ENCODE measurements at regions of chr16 and their contacts with region 1.

Region 1: DNA sequence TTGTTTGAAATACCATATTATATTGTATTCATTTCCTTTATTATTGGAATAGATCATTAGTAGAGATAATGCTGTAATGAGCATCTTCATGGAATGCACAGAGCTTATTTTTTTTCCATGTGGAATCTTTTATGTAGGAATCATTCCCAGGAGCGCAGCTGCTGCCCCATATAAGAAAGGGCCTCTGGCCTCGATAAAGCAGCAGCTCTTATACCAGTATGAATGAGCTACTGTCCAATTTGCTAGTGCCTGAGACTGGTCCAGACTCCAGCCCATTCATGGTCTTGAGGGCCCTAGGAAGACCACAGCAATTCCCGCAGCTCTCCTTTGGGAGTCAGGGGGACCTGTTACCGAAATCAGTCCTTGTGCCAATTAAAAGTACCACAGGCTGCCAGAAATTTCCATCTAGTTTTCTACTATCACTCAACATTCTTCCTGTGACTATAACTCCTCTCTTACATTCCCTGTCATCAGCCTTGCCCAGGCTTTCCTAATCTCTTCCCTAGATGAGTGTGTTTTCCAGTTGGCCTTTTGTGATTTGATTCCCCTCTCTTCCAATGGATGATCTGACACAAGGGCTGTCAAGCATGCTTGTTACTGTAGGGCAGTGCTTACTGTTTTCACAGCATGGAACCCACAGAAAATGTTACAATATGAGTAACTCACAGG is 1.9 kb downstream of the ZNF843 start:
- DNase-seq: no peak
- ATAC-seq: no peak
- H3K4me3 ChIP-seq: no peak overlapping the region
- H3K4me3 Mint-ChIP-seq: peak overlapping the region in 1 of 10 donors; percentile 22
- H3K27ac ChIP-seq: no peak overlapping the region
- H3K27ac Mint-ChIP-seq: no peak overlapping the region
- H3K4me1 ChIP-seq: no peaks in the 10 kb centered on the region
- H3K4me1 Mint-ChIP-seq: peaks cover 0 to 23% (median 9%) of the 10 kb centered on the region in 7 donors
- H3K27me3 ChIP-seq: no peaks in the 10 kb centered on the region
- H3K27me3 Mint-ChIP-seq: peaks cover 0 to 3% (median 0%) of the 10 kb centered on the region in 5 donors

Region 2: GRCh38 chr16:30844671-30845449 is 595.8 kb before region 1 on chr16:
- CTCF ChIA-PET with region 1: interaction called, 3 read pairs
- POLR2A ChIA-PET with region 1: no interaction called
- intact Hi-C with region 1: loop called (anchors 1 to 10 kb)
- DNase-seq: peak; percentile 50 to 89 (median 83)
- ATAC-seq: peak; percentile 97
- H3K4me3 ChIP-seq: no peak overlapping the region
- H3K4me3 Mint-ChIP-seq: peak overlapping the region in 9 of 10 donors; percentile 22 to 67 (median 64)
- H3K27ac ChIP-seq: peak overlapping the region; percentile 1
- H3K27ac Mint-ChIP-seq: peak overlapping the region; percentile 2 to 82 (median 73)
- H3K4me1 ChIP-seq: peaks cover 0 to 5% of the 10 kb centered on the region in 2 donors
- H3K4me1 Mint-ChIP-seq: peaks cover 6 to 14% (median 8%) of the 10 kb centered on the region in 7 donors
- H3K27me3 ChIP-seq: no peaks in the 10 kb centered on the region
- H3K27me3 Mint-ChIP-seq: no peaks in the 10 kb centered on the region

Region 3: DNA sequence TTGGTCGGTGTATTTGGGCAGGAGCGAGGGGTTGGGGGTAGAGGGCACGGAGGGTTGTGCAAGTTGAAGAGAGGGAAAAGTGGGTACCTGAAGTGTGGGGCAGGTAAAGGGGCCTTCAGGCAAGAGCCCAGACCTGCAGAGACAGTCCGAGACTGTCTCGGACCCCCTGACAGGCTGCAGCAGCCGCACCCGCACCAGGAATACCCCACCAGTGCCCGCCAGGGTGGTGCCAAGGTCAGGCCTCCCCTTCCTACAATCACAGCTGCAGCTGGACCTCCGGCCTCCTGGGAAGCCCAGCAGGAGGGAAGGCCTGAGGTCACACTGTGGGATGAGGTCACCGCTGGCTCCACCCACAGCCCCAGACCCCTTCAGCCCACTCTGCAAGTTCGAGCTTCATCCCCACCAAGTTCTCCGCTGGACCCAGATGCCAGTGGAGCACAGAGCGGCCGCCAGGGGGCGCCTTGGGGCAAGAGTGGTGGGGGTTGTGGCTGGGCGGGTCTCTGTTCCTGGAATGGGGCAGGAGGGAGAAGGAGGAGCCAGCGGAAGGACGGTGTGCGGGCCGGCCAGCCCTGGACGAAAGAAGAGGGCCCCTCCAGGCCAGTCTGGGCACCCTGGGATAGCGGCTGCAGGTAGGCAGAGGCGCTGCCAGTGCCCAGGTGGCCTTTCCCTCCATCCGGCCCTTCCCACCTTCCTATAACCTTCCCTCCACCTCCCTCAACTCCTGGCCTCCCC is 455.8 kb before region 1 on chr16 and contains the start of gene HSD3B7:
- CTCF ChIA-PET with region 1: interaction called, 5 read pairs
- POLR2A ChIA-PET with region 1: no interaction called
- intact Hi-C with region 1: loop called in 1 of 2 experiments (anchors 1 kb)
- DNase-seq: peak; percentile 54 to 91 (median 72)
- ATAC-seq: peak; percentile 86
- H3K4me3 ChIP-seq: no peak within 1 kb of the TSS
- H3K4me3 Mint-ChIP-seq: peak within 1 kb of the TSS in 3 of 10 donors; percentile 39 to 54 (median 51)
- H3K27ac ChIP-seq: no peak within 1 kb of the TSS
- H3K27ac Mint-ChIP-seq: peak within 1 kb of the TSS in 2 of 9 donors; percentile 29 to 62
- H3K4me1 ChIP-seq: no peaks in the 10 kb centered on the region
- H3K4me1 Mint-ChIP-seq: peaks cover 0 to 17% (median 0%) of the 10 kb centered on the region in 7 donors
- H3K27me3 ChIP-seq: no peaks in the 10 kb centered on the region
- H3K27me3 Mint-ChIP-seq: no peaks in the 10 kb centered on the region
- total RNA-seq, gene HSD3B7: 0.66 to 7.0 (median 3.3) TPM

Region 4: DNA sequence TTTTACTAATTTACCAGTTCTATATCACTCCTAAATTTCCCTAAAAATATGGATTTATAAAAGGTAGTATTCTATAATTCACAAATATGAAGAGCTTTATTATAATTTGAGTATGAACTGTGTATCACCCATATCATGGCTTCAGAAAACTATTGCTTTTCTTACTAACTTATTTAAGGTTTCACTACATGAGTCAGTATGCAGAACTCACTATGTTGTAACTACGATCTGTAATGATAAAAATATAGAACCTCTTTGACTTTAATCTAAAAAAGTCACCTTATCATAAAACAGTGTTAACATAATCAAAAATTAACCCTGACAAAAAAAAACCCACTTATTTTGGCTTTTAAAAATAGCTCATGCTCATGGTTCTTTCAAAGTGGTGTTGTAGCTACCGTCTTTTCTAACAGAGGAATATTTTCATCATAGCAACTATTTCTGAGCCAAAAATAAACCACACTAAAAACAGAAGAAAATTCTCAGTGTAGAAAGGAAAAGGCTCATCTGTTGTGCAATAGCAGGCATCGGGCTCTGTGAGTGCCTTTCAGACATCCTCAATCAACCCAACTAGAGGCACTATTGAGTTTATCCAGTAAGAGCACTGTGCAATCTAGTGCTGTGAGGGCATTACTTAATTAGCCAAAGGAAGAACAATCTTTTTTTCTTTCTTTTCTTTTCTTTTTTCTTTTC is 138.8 kb before region 1 on chr16:
- CTCF ChIA-PET with region 1: no interaction called
- POLR2A ChIA-PET with region 1: no interaction called
- intact Hi-C with region 1: loop called in 1 of 2 experiments (anchors 5 kb)
- DNase-seq: no peak
- ATAC-seq: peak; percentile 78
- H3K4me3 ChIP-seq: no peak overlapping the region
- H3K4me3 Mint-ChIP-seq: peak overlapping the region in 1 of 10 donors; percentile 17
- H3K27ac ChIP-seq: no peak overlapping the region
- H3K27ac Mint-ChIP-seq: no peak overlapping the region
- H3K4me1 ChIP-seq: no peaks in the 10 kb centered on the region
- H3K4me1 Mint-ChIP-seq: peaks cover 0 to 17% (median 6%) of the 10 kb centered on the region in 7 donors
- H3K27me3 ChIP-seq: no peaks in the 10 kb centered on the region
- H3K27me3 Mint-ChIP-seq: peaks cover 6 to 27% (median 16%) of the 10 kb centered on the region in 5 donors

Region 5: DNA sequence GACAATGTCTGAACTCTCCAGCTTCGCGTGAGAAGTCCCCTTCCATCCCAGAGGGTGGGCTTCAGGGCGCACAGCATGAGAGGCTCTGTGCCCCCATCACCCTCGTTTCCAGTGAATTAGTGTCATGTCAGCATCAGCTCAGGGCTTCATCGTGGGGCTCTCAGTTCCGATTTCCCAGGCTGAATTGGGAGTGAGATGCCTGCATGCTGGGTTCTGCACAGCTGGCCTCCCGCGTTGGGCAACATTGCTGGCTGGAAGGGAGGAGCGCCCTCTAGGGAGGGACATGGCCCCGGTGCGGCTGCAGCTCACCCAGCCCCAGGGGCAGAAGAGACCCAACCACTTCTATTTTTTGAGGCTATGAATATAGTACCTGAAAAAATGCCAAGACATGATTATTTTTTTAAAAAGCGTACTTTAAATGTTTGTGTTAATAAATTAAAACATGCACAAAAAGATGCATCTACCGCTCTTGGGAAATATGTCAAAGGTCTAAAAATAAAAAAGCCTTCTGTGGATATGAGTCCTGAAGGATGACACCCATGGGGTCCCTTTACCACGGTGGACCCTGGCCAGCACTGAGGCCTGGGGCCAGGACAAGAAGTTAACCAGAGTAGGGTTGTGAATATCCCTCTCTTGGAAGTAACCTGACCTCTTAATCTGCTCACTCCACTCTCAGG is 58.0 kb before region 1 on chr16:
- CTCF ChIA-PET with region 1: interaction called, 4 read pairs
- POLR2A ChIA-PET with region 1: no interaction called
- intact Hi-C with region 1: loop called in 1 of 2 experiments (anchors 2 kb)
- DNase-seq: peak; percentile 24 to 75 (median 47)
- ATAC-seq: peak; percentile 82
- H3K4me3 ChIP-seq: no peak overlapping the region
- H3K4me3 Mint-ChIP-seq: no peak overlapping the region
- H3K27ac ChIP-seq: no peak overlapping the region
- H3K27ac Mint-ChIP-seq: peak overlapping the region in 1 of 9 donors; percentile 22
- H3K4me1 ChIP-seq: peaks cover 0 to 3% of the 10 kb centered on the region in 2 donors
- H3K4me1 Mint-ChIP-seq: peaks cover 0 to 23% (median 4%) of the 10 kb centered on the region in 7 donors
- H3K27me3 ChIP-seq: peaks cover 0 to 4% of the 10 kb centered on the region in 2 donors
- H3K27me3 Mint-ChIP-seq: peaks cover 0 to 8% (median 4%) of the 10 kb centered on the region in 5 donors

Region 6: GRCh38 chr16:31472709-31473203 is 32.1 kb after region 1 on chr16:
- CTCF ChIA-PET with region 1: no interaction called
- POLR2A ChIA-PET with region 1: no interaction called
- intact Hi-C with region 1: no loop called
- DNase-seq: peak in 1 of 9 donors; percentile 36
- ATAC-seq: peak; percentile 33
- H3K4me3 ChIP-seq: no peak overlapping the region
- H3K4me3 Mint-ChIP-seq: peak overlapping the region; percentile 60 to 84 (median 79)
- H3K27ac ChIP-seq: no peak overlapping the region
- H3K27ac Mint-ChIP-seq: peak overlapping the region in 1 of 9 donors; percentile 64
- H3K4me1 ChIP-seq: peaks cover 4 to 6% of the 10 kb centered on the region in 2 donors
- H3K4me1 Mint-ChIP-seq: peaks cover 8 to 29% (median 21%) of the 10 kb centered on the region in 7 donors
- H3K27me3 ChIP-seq: no peaks in the 10 kb centered on the region
- H3K27me3 Mint-ChIP-seq: peaks cover 0 to 52% (median 14%) of the 10 kb centered on the region in 5 donors

Region 7: DNA sequence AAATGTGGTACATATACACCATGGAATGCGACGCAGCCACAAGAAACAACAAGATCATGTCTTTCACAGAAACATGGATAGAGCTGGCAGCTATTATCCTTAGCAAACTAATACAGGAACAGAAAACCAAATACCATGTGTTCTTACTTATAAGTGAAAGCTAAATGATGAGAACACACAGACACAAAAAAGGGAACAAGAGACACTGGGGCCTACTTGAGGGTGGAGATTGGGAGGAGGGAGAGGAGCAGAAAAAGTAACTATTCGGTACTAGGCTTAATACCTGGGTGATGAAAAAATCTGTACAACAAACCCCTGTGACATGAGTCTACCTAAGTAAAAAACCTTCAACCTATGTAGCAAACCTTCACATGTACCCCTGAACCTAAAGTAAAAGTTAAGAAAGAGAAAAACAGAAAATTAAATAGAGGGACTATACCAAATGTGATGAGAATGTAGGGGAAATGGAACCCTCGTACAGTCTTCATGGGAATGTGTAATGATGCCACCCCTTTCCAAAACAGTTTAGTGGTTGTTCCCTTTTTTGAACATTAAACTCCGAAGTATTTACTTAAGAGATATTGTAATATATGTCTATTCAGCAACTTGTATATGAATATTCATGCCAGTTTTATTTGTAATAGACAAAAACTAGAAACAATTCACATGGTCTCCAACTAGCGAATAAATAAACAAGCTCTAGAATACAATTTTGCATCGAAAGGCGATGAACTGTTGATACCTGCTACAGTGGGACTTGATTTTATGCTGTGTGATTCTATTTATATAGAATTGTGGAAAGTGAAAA is 121.0 kb after region 1 on chr16:
- CTCF ChIA-PET with region 1: no interaction called
- POLR2A ChIA-PET with region 1: no interaction called
- intact Hi-C with region 1: no loop called
- DNase-seq: no peak
- ATAC-seq: no peak
- H3K4me3 ChIP-seq: no peak overlapping the region
- H3K4me3 Mint-ChIP-seq: no peak overlapping the region
- H3K27ac ChIP-seq: no peak overlapping the region
- H3K27ac Mint-ChIP-seq: no peak overlapping the region
- H3K4me1 ChIP-seq: no peaks in the 10 kb centered on the region
- H3K4me1 Mint-ChIP-seq: no peaks in the 10 kb centered on the region
- H3K27me3 ChIP-seq: no peaks in the 10 kb centered on the region
- H3K27me3 Mint-ChIP-seq: peaks cover 0 to 36% (median 20%) of the 10 kb centered on the region in 5 donors